Posterior vena cava (tissue), 2 donors: ENCODE measurements at regions of chr11 and their contacts with region 1.

Region 1: GRCh38 chr11:69704508-69705253 is 859 bp upstream of the FGF19 start:
- DNase-seq: no peak

Region 2: DNA sequence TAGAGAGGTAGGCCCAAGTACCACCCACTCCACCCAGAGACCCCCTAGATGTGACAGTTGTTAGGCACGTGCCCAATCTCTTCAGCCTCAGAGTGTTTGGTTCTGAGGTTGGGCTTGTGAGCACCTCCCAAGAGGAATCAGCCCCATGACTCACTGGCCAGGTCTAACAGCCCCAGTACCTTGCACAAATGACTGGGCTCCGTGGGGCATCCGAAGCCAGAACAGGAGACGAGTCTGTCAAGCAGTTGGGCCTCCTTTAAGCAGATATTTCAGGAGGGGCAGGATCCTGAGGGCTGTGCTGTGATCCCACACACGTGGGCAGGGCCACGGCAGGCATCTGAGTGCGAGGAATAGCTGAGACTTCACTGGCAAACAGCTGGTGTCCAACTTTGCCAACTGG is 28.2 kb after region 1 on chr11:
- intact Hi-C with region 1: no loop called
- DNase-seq: no peak

Region 3: DNA sequence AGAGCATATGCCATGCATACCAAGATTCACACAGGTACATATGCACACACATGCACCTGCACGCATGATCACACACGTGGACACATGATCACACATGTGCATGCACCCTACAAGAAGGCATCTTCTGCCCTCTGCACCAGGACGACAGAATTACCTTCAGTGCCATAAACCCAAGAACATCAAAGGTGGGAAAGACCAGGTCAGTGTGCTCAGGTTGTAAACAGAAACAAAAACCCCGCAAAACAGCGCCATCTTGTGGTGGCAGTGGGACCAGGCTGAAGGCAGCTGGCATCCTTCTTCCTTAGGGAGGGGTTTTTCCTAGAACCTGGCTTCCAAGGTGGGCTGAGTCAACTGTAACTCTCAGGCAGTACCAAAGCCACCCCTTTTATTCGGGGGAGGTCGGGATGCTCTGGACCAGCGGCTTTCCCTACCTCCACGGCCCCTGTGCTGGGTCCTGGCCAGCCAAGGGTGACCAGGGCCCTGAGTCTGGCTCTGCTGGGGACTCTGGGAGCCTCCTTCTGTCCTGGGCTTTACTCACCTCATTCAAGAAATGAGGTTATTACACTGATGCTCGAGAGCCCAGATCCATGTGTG is 183.9 kb after region 1 on chr11:
- intact Hi-C with region 1: loop called in 1 of 2 experiments (anchors 5 kb)
- DNase-seq: peak; percentile 81